PC-3 (cell line): ENCODE measurements at regions of chr11 and their contacts with region 1.

Region 1: DNA sequence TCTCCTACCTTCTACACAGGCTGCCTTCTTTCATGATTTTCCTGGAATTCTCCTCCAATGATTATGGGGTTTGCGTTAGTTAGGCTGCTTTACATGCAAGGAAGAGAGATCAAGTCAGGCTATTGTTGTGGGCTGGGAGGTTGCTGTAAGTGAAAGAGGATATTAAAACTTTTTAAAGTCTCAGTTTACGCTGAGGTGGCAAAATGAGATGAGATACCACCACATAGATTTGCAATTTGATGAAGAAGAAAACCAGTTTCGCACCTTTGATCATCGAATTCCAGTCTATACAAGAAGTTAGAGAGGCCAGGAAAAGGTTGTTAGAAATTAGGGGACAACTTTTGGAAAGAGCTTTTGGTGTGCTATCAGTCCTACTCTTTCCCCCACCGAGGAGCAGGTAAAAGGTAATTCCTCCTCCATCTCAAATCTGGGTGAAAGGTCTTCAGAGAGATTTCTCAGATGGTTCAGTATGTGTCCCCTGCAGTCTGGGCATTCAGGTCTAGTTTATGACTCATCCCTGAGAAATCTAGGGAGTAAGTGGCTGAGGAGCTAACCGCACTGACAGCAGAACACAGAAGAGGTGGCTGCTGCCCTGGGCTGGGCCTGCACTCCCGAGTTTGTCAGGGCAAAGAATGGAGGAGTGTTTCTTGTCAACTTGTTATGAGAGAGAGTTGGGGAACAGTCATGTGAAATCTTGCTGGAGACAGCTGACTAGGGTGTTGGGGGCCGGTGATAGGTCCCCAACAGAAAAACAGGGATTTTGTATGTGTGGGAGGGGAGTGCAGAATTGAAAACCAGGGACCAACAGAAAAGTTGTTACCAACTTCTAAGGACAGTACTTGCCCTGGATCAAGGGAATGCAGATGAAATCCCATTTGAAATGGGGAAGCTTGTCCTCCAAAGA is 34.7 kb downstream of the CCDC83 start:
- DNase-seq: peak; percentile 97
- ATAC-seq: peak; percentile 100
- H3K4me3 ChIP-seq: peak overlapping the region; percentile 11; the same call in 1 of the 2 replicates
- H3K27ac ChIP-seq: peak overlapping the region; percentile 34
- H3K4me1 ChIP-seq: peaks cover 27% of the 10 kb centered on the region
- H3K27me3 ChIP-seq: no peaks in the 10 kb centered on the region
- CTCF ChIP-seq: no peak

Region 2: DNA sequence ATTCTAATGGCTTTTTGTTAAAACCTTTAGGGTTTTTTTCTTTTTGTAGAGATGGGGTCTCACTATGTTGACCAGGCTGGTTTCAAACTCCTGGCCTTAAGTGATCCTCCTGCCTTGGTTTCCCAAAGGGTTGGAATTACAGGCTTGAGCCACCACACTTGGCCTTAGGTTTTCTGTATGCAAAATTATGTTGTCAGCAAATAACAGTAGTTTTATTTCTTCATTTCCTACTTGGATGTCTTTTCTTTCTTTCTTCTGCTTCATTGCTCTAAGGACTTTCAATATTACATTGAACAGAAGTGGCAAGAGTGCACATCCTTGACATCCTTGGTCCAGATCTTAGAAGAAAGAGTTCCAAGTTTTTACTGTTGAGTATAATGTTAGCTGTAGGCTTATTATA is 537.5 kb after region 1 on chr11:
- CTCF ChIA-PET with region 1: no interaction called
- POLR2A ChIA-PET with region 1: interaction called, 10 read pairs
- intact Hi-C with region 1: no loop called
- DNase-seq: no peak
- ATAC-seq: no peak
- H3K4me3 ChIP-seq: no peak overlapping the region
- H3K27ac ChIP-seq: no peak overlapping the region
- H3K4me1 ChIP-seq: no peaks in the 10 kb centered on the region
- H3K27me3 ChIP-seq: no peaks in the 10 kb centered on the region
- CTCF ChIP-seq: no peak